ENCODE measurements at regions of chr9 and their contacts with region 1.

Region 1: GRCh38 chr9:33167046-33167808 is at the start of gene B4GALT1:
- DNase-seq: peak; percentile 64
- ATAC-seq: peak; percentile 57
- H3K4me3 ChIP-seq: peak within 1 kb of the TSS; percentile 78 to 95 (median 85)
- H3K27ac ChIP-seq: peak within 1 kb of the TSS; percentile 80
- H3K4me1 ChIP-seq: peaks cover 72% of the 10 kb centered on the region
- H3K27me3 ChIP-seq: no peaks in the 10 kb centered on the region; a peak in 1 of 5 replicates
- CTCF ChIP-seq: peak; percentile 34
- EP300 ChIP-seq: 0 out of 4 replicates have a peak, but pooled peaks of 1 of the 2 experiments have one; percentile 13
- POLR2A ChIP-seq: peak; percentile 42 to 72; a peak in 3 of 4 replicates
- RAD21 ChIP-seq: no peak; the same call in 1 of the 2 replicates
- total RNA-seq, gene B4GALT1: 15.7 TPM in 2 replicates

Region 2: DNA sequence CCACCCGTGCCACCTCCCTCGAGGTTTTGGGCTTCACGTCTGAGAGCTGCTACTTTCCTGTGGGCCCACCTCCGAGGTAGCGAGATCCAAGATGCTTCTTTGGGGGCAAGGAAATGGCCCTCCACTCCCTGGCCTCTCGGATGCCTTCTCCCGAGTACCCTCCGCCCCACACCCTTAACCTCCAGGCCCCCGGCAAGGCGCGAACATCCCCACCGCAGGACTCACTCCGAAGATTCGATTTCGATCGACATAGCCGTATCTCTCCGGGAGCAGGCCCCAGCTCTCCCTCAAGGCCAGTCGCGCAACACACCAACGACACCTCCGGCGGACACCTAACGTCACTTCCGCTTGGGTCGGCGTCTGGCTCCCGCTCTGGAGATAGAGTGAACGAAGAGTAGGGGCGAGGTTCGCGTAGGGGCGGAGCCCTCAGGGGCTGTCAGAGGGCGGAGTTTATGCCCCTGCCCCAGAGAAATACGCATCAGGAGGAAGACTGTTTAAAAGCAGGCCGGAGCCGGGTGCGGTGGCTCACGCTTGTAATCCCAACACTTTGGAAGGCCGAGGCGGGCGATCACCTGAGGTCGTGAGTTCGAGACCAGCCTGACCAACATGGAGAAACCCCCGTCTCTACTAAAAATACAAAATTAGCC is 90.7 kb before region 1 on chr9 and contains the start of gene SMU1:
- CTCF ChIA-PET with region 1: interaction called, 13 read pairs
- POLR2A ChIA-PET with region 1: interaction called, 10 read pairs
- in situ Hi-C with region 1: no loop called
- intact Hi-C with region 1: loop called (anchors 2 kb)
- DNase-seq: peak; percentile 96
- ATAC-seq: peak; percentile 98
- H3K4me3 ChIP-seq: peak within 1 kb of the TSS; percentile 63 to 91 (median 90)
- H3K27ac ChIP-seq: peak within 1 kb of the TSS; percentile 87
- H3K4me1 ChIP-seq: peaks cover 33% of the 10 kb centered on the region
- H3K27me3 ChIP-seq: no peaks in the 10 kb centered on the region; a peak in 1 of 5 replicates
- CTCF ChIP-seq: peak; percentile 25; the same call in 1 of the 2 replicates
- EP300 ChIP-seq: no peak
- POLR2A ChIP-seq: peak; percentile 82 to 83
- RAD21 ChIP-seq: 0 out of 2 replicates have a peak, but pooled peaks have one; percentile 6
- total RNA-seq, gene SMU1: 36.6 and 51.5 TPM in 2 replicates

Region 3: DNA sequence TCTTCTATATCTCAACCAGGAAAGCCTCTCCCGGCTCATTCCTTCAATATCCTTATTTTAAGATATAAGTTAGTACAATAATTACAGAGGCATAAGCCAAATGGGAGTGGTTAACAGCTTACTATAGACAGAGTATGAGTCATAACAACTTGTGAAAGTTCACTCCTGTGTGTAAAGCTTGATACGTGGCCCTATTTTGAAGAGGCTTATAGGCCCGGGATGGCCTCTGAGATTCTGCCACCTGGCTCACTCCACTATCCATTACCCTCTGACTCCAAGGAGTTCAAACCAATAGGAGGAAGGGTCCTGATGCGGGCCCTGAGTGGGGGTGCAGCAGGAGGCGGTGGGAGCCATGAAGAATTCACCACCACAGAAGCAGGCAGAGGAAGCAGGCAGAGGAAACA is 36.7 kb before region 1 on chr9:
- CTCF ChIA-PET with region 1: no interaction called
- POLR2A ChIA-PET with region 1: interaction called, 3 read pairs
- in situ Hi-C with region 1: no loop called
- intact Hi-C with region 1: loop called (anchors 5 kb)
- DNase-seq: no peak
- ATAC-seq: no peak
- H3K4me3 ChIP-seq: no peak overlapping the region
- H3K27ac ChIP-seq: no peak overlapping the region
- H3K4me1 ChIP-seq: peaks cover 22% of the 10 kb centered on the region
- H3K27me3 ChIP-seq: no peaks in the 10 kb centered on the region
- CTCF ChIP-seq: no peak
- EP300 ChIP-seq: no peak
- POLR2A ChIP-seq: no peak
- RAD21 ChIP-seq: no peak

Region 4: DNA sequence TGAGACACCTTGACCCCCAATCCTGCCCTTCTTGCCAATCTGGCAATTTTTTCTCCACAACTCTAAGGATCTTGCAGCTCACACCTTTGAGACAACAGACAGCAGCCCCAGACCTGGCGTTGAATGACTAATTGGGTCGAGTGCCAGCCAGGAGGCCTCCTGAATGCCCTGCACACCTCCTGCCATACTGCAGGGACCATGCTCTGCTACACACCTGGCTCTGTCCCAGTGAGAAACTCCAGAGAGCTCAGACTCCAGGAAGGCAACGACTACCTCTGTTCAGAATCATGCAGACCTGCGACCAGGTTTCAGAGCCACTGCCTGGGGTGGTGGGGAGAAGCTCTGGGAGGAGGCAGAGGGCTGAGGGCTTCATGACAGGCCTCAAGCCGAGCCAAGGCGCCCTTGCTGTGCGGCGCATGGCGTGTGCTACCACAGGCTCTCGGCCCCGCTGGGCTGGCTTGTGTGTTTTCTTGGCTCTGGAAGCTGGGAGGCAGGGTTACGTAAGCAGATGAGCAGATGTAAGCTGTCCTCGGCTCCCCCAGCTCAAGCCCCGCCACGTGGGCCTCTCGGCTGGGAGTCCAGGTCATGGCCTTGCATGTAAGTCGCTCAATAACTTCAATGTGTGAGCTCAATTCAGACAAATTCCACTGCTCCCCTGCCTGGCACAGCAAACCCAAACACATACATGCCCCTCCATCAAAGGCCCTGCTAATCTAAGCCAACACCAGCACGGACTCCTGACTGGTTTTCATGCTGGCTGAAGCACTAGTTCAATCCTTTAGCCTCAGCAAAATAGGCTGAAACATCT is 27.6 kb before region 1 on chr9:
- CTCF ChIA-PET with region 1: no interaction called
- POLR2A ChIA-PET with region 1: interaction called, 26 read pairs
- in situ Hi-C with region 1: no loop called
- intact Hi-C with region 1: loop called (anchors 2 kb)
- DNase-seq: peak; percentile 88
- ATAC-seq: peak; percentile 93
- H3K4me3 ChIP-seq: peak overlapping the region in 1 of 3 experiments; percentile 39; a peak in 2 of 6 replicates
- H3K27ac ChIP-seq: peak overlapping the region; percentile 69
- H3K4me1 ChIP-seq: peaks cover 49% of the 10 kb centered on the region
- H3K27me3 ChIP-seq: no peaks in the 10 kb centered on the region
- CTCF ChIP-seq: peak; percentile 43
- EP300 ChIP-seq: peak in 1 of 2 experiments; percentile 67; a peak in 1 of 4 replicates
- POLR2A ChIP-seq: 0 out of 4 replicates have a peak, but pooled peaks of 1 of the 2 experiments have one; percentile 22
- RAD21 ChIP-seq: 0 out of 2 replicates have a peak, but pooled peaks have one; percentile 18

Region 5: GRCh38 chr9:33192493-33193255 is 25.4 kb after region 1 on chr9:
- CTCF ChIA-PET with region 1: no interaction called
- POLR2A ChIA-PET with region 1: no interaction called
- in situ Hi-C with region 1: no loop called
- intact Hi-C with region 1: no loop called
- DNase-seq: no peak
- ATAC-seq: no peak
- H3K4me3 ChIP-seq: no peak overlapping the region
- H3K27ac ChIP-seq: no peak overlapping the region
- H3K4me1 ChIP-seq: no peaks in the 10 kb centered on the region
- H3K27me3 ChIP-seq: peaks cover 4 to 43% of the 10 kb centered on the region in 2 experiments; a peak in 3 of 5 replicates
- CTCF ChIP-seq: no peak
- EP300 ChIP-seq: no peak
- POLR2A ChIP-seq: no peak
- RAD21 ChIP-seq: no peak